Activated CD4-positive, alpha-beta T cell treated with anti-CD3 and anti-CD28 coated beads for 36 hours (primary cell): ENCODE measurements at regions of chr17 and their contacts with region 1.

Region 1: GRCh38 chr17:80981062-80981902 is 10.4 kb upstream of the CHMP6 start:
- DNase-seq: peak; percentile 66
- ATAC-seq: peak; percentile 43
- H3K4me3 Mint-ChIP-seq: no peak overlapping the region
- H3K27ac Mint-ChIP-seq: no peak overlapping the region
- H3K4me1 Mint-ChIP-seq: peaks cover 9% of the 10 kb centered on the region
- H3K27me3 Mint-ChIP-seq: peaks cover 5% of the 10 kb centered on the region

Region 2: DNA sequence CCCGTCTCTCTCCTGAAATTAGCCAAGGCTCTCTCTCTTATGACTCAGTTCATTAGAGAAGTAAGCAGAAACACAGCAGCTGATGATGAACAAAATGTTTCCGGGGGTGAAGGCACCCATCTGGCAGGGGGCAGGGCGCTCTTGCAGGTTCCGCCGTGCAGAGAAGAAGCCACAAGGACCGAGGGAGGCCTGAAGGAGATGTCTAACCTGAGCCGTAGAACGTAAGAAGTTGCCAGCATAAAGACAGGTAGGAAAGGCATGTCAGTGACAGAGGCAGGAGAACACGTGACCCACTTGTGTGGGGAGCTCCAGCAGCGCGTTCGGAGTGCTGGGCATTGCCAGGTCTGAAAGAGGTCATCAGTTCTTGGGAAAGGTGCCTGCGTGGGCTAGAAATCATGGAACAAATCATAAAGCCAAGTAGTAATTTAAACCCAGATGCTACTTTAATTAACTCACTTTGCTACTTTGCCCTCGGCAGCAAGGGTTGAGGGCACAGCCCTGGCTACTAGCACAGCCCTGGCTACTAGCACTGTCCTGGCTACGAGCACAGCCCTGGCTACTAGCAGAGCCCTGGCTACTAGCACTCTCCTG is 238.0 kb before region 1 on chr17:
- CTCF ChIA-PET with region 1: no interaction called
- POLR2A ChIA-PET with region 1: no interaction called
- intact Hi-C with region 1: loop called in 1 of 2 experiments (anchors 10 kb)
- DNase-seq: peak; percentile 62
- ATAC-seq: peak; percentile 63
- H3K4me3 Mint-ChIP-seq: peak overlapping the region; percentile 19
- H3K27ac Mint-ChIP-seq: peak overlapping the region; percentile 72
- H3K4me1 Mint-ChIP-seq: peaks cover 58% of the 10 kb centered on the region
- H3K27me3 Mint-ChIP-seq: no peaks in the 10 kb centered on the region

Region 3: GRCh38 chr17:81002409-81003361 is 21.4 kb after region 1 on chr17:
- CTCF ChIA-PET with region 1: no interaction called
- POLR2A ChIA-PET with region 1: no interaction called
- intact Hi-C with region 1: no loop called
- DNase-seq: peak; percentile 22
- ATAC-seq: no peak
- H3K4me3 Mint-ChIP-seq: no peak overlapping the region
- H3K27ac Mint-ChIP-seq: no peak overlapping the region
- H3K4me1 Mint-ChIP-seq: peaks cover 10% of the 10 kb centered on the region
- H3K27me3 Mint-ChIP-seq: peaks cover 29% of the 10 kb centered on the region

Region 4: GRCh38 chr17:81549031-81549557 is 567.8 kb after region 1 on chr17:
- CTCF ChIA-PET with region 1: no interaction called
- POLR2A ChIA-PET with region 1: no interaction called
- intact Hi-C with region 1: no loop called
- DNase-seq: no peak
- ATAC-seq: no peak
- H3K4me3 Mint-ChIP-seq: no peak overlapping the region
- H3K27ac Mint-ChIP-seq: no peak overlapping the region
- H3K4me1 Mint-ChIP-seq: peaks cover 33% of the 10 kb centered on the region
- H3K27me3 Mint-ChIP-seq: no peaks in the 10 kb centered on the region